A673 (cell line): ENCODE measurements at regions of chr14 and their contacts with region 1.

Region 1: GRCh38 chr14:94548999-94549985 is 11.9 kb upstream of the SERPINA4 start:
- DNase-seq: peak; percentile 72
- H3K4me3 ChIP-seq: no peak overlapping the region
- H3K27ac ChIP-seq: no peak overlapping the region
- H3K4me1 ChIP-seq: no peaks in the 10 kb centered on the region
- H3K27me3 ChIP-seq: peaks cover 5% of the 10 kb centered on the region
- CTCF ChIP-seq: peak; percentile 92

Region 2: GRCh38 chr14:94193776-94194175 is 355.5 kb before region 1 on chr14:
- CTCF ChIA-PET with region 1: no interaction called
- POLR2A ChIA-PET with region 1: no interaction called
- intact Hi-C with region 1: no loop called
- DNase-seq: no peak
- H3K4me3 ChIP-seq: no peak overlapping the region
- H3K27ac ChIP-seq: no peak overlapping the region
- H3K4me1 ChIP-seq: no peaks in the 10 kb centered on the region
- H3K27me3 ChIP-seq: peaks cover 17% of the 10 kb centered on the region
- CTCF ChIP-seq: no peak

Region 3: GRCh38 chr14:94392510-94392935 is 156.8 kb before region 1 on chr14:
- CTCF ChIA-PET with region 1: no interaction called
- POLR2A ChIA-PET with region 1: no interaction called
- intact Hi-C with region 1: no loop called
- DNase-seq: peak; percentile 31
- H3K4me3 ChIP-seq: no peak overlapping the region
- H3K27ac ChIP-seq: no peak overlapping the region
- H3K4me1 ChIP-seq: peaks cover 7% of the 10 kb centered on the region
- H3K27me3 ChIP-seq: no peaks in the 10 kb centered on the region
- CTCF ChIP-seq: no peak

Region 4: GRCh38 chr14:94428610-94429009 is 120.7 kb before region 1 on chr14:
- CTCF ChIA-PET with region 1: interaction called, 17 read pairs
- POLR2A ChIA-PET with region 1: no interaction called
- intact Hi-C with region 1: no loop called
- DNase-seq: no peak
- H3K4me3 ChIP-seq: no peak overlapping the region
- H3K27ac ChIP-seq: no peak overlapping the region
- H3K4me1 ChIP-seq: no peaks in the 10 kb centered on the region
- H3K27me3 ChIP-seq: peaks cover 30% of the 10 kb centered on the region
- CTCF ChIP-seq: no peak